SK-N-SH (cell line): ENCODE measurements at regions of chr21 and their contacts with region 1.

Region 1: DNA sequence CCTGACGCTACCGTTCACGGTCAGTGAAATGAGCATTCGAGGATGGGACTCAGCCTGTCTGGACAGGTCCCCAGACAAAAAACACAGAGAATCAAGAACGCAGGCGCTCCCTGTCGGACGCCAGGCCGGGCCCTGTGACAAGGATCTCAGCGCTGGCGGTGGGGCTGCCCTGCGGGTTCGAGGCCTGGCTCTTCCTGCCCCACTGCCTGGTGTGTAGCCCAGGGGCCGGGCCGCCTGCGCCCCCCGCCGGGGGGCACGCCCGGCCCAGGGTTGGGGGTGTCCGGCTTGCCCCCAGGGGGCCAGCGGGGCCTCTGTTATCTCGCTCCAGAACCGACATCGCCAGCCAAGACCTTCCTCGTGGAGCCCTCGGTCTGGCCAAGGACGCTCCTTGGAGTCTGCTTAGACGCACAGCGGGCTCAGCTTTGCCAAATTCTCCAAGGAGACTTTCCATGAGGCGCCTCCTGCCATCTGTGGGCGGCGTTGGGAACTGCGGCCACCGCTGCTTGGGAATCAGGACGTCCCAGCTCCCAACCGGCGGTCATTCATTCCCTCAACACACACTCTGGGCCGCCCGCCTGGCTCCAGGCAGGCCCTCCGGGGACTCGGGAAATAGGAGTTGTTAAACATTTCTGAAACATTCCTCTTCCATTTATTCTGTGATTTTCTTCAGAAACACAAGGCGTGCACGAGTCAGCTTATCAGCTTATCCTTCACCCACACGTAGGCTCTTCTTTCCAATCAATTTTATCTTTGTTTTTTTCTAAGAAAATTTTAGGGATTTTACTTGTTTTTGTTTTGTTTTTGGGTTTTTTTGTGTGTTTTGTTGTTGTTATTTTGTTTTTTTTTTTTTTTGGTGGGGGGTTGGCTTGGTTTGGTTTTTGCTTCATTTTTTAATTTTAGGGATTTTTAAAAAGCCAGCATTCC is 11.4 kb upstream of the RIPK4 start:
- DNase-seq: peak; percentile 81
- H3K4me3 ChIP-seq: peak overlapping the region in 1 of 2 experiments; percentile 43; a peak in 1 of 4 replicates
- H3K27ac ChIP-seq: peak overlapping the region in 1 of 2 experiments; percentile 6; a peak in 1 of 4 replicates
- H3K4me1 ChIP-seq: 0 out of 4 replicates have a peak, but pooled peaks cover 0 to 3% of the 10 kb centered on the region in 2 experiments
- H3K27me3 ChIP-seq: no peaks in the 10 kb centered on the region
- CTCF ChIP-seq: peak; percentile 88
- EP300 ChIP-seq: no peak
- RAD21 ChIP-seq: peak; percentile 77

Region 2: GRCh38 chr21:41640748-41641509 is 137.3 kb before region 1 on chr21:
- CTCF ChIA-PET with region 1: no interaction called
- POLR2A ChIA-PET with region 1: no interaction called
- DNase-seq: no peak
- H3K4me3 ChIP-seq: no peak overlapping the region
- H3K27ac ChIP-seq: peak overlapping the region; percentile 78 to 99; a peak in 3 of 4 replicates
- H3K4me1 ChIP-seq: peaks cover 0 to 24% of the 10 kb centered on the region in 2 experiments; a peak in 2 of 4 replicates
- H3K27me3 ChIP-seq: no peaks in the 10 kb centered on the region
- CTCF ChIP-seq: no peak
- EP300 ChIP-seq: no peak
- RAD21 ChIP-seq: no peak

Region 3: DNA sequence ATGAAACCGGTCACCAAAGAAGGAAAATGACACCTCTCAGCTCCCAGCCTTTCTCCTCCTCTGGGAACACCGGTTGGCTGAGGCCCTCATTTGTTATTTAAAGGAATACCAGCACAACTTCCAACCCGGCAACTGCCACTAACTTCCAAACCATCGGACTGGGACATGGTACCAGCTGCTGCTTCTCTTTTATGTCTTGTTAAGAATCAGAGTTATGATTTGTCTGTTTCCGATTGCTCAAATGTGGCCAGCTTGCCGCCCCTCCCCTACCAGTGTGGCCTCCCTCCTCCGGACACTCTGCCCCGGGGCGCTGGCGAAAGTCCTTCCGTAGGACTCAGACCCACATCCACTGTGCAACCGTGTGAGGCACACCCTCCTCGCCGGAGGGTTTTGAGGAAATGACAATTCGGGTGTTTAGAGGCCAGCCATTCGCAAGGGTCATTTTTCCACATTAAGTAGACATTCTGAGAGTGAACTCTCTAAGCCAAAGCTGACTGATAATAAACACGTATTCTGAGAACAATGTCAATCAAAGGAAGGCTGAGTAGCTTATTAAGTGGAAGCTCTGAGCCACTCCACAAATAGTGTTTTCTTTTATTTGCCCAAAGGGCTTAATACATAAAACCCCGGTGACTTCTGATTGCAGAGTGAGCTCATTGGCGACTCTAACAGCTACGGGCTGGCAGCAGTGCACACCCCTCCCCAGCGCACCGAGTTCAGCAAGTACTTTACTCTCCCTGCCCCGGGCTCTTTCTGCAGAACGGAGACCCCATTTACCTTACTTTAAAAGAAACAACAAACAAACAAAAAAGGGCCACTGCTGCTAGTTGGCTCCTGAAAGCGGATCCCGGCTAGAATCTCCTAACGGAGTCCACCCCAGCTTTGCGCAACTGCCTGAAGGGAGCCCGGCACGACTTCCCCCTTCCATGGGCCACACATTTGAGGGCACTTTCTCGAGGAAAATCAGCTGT is 16.7 kb before region 1 on chr21:
- CTCF ChIA-PET with region 1: interaction called, 16 read pairs
- POLR2A ChIA-PET with region 1: no interaction called
- DNase-seq: no peak
- H3K4me3 ChIP-seq: peak overlapping the region in 1 of 2 experiments; percentile 14; a peak in 1 of 4 replicates
- H3K27ac ChIP-seq: peak overlapping the region in 1 of 2 experiments; percentile 31; a peak in 1 of 4 replicates
- H3K4me1 ChIP-seq: peaks cover 0 to 10% of the 10 kb centered on the region in 2 experiments; a peak in 2 of 4 replicates
- H3K27me3 ChIP-seq: no peaks in the 10 kb centered on the region
- CTCF ChIP-seq: no peak
- EP300 ChIP-seq: no peak
- RAD21 ChIP-seq: no peak

Region 4: GRCh38 chr21:41807671-41808070 is 29.5 kb after region 1 on chr21:
- CTCF ChIA-PET with region 1: no interaction called
- POLR2A ChIA-PET with region 1: no interaction called
- DNase-seq: no peak
- H3K4me3 ChIP-seq: no peak overlapping the region
- H3K27ac ChIP-seq: no peak overlapping the region
- H3K4me1 ChIP-seq: no peaks in the 10 kb centered on the region; a peak in 1 of 4 replicates
- H3K27me3 ChIP-seq: no peaks in the 10 kb centered on the region
- CTCF ChIP-seq: no peak
- EP300 ChIP-seq: no peak
- RAD21 ChIP-seq: no peak